Head of caudate nucleus (tissue), 42 donors: ENCODE measurements at regions of chr7 and their contacts with region 1.

Region 1: DNA sequence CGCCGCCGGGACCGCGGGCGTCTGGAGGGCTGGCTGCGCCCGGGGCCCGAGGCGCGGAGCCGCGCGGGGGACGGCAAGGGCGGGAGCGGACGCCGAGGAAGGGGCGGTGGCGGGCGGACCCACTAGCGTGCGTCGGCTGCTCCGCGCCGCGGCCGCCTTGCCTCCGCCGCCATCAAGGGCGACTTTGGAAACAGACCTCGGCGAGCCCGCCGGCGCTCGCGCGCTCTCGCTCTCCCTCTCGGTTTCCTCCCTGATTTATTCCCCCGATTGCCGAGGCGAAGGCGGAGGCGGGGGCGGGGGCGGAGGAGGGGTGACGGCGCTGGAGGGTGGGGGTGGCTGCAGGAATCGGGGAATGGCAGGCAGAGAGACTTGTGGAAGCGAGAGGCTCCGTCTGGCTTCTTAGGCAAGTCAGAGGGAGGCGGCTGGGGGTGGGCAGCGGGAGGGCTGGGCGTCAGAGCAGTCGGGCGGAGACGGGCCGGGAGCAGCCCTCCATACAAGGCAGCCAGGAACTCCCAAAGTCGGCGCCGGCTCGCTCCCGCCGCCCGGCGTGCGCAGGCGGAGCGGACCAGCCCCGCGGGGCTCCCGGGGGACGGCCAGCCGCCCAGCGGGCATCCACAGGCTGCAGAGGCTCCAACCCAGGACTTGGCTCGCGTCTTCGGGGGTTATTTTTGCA is at the start of gene CACNA2D1:
- DNase-seq: peak; percentile 65 to 94 (median 84)

Region 2: GRCh38 chr7:82247814-82248433 is 195.8 kb before region 1 on chr7:
- intact Hi-C with region 1: loop called (anchors 10 kb)
- DNase-seq: peak in 3 of 42 donors; percentile 11 to 35 (median 13)

Region 3: DNA sequence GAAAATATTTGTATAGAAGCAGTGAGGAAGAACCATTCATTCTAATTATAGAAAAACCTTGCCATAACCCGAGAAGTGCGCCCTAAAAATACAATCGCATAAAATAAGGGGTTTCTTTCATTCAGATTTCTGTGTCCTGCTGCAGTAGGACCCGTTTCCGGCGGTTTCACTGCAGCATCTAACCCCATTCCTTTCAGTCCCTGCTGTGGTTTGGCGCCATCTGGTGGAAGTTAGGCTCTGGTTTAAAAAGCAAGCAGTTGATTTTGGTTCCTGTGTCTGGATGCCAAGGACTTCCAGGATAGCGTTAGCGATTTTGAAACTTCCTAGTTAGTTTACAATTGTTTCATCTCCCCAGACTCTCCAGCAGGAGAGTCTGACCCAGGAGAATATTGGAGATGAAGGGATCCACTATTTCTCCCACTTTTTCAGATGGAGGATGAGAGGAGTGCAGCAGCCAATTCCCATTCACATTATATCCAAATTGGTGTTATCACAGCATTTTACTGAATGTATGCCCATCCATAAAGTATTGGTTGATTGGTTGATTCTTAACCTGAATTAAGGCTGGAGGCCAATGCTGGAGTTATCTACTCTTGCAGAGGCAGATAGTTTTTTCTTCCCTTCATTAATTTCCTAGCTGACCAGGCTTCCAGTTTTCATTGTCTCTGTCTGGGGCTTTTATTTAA is 128.7 kb after region 1 on chr7:
- intact Hi-C with region 1: no loop called
- DNase-seq: peak; percentile 70 to 97 (median 90)